Activated CD4-positive, alpha-beta T cell treated with anti-CD3 and anti-CD28 coated beads for 36 hours (primary cell): ENCODE measurements at regions of chr22 and their contacts with region 1.

Region 1: GRCh38 chr22:31290494-31291471 is 1.5 kb downstream of the PIK3IP1 start:
- DNase-seq: peak; percentile 97
- ATAC-seq: peak; percentile 78
- H3K4me3 Mint-ChIP-seq: peak overlapping the region; percentile 90
- H3K27ac Mint-ChIP-seq: peak overlapping the region; percentile 97
- H3K4me1 Mint-ChIP-seq: peaks cover 71% of the 10 kb centered on the region
- H3K27me3 Mint-ChIP-seq: no peaks in the 10 kb centered on the region

Region 2: DNA sequence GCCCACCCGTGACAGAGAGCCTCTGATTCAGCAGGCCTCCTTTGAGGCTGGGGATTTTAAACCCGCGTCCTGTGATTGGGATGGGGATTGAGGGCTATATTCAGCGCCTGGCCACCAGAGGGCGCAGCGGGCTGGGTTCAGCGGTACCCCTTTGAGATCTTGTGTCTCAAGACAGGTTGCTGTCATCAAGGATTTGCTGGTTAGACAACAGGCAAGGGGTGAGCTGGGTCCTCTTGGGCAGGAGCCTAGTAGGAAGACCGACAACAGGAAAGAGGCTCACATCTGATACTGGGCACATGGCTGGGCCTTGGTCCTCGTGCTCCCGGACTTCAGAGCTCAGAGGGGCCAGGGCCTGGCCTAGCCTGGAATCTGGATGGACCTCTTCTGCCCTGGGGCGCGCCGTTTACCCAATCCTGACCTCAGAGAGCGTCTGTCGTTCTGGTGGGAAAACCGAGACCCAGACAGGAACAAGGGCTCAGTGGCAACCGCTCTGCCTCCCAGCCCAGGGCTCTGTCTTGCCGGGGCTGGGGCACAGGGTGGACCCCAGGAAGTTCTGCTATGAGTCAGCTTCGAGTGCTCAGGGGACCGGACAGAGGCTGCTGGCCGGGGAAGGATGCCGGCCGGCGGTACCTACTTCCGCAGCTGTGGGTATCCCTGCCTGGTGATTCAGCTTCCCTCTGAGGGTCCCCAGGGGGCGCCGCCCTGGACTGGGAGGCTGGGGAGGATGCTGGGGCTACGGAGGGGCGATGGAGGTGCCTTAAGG is 656.1 kb before region 1 on chr22:
- CTCF ChIA-PET with region 1: no interaction called
- POLR2A ChIA-PET with region 1: no interaction called
- intact Hi-C with region 1: loop called in 1 of 2 experiments (anchors 5 kb)
- DNase-seq: peak; percentile 95
- ATAC-seq: peak; percentile 77
- H3K4me3 Mint-ChIP-seq: peak overlapping the region; percentile 75
- H3K27ac Mint-ChIP-seq: peak overlapping the region; percentile 84
- H3K4me1 Mint-ChIP-seq: peaks cover 22% of the 10 kb centered on the region
- H3K27me3 Mint-ChIP-seq: no peaks in the 10 kb centered on the region

Region 3: DNA sequence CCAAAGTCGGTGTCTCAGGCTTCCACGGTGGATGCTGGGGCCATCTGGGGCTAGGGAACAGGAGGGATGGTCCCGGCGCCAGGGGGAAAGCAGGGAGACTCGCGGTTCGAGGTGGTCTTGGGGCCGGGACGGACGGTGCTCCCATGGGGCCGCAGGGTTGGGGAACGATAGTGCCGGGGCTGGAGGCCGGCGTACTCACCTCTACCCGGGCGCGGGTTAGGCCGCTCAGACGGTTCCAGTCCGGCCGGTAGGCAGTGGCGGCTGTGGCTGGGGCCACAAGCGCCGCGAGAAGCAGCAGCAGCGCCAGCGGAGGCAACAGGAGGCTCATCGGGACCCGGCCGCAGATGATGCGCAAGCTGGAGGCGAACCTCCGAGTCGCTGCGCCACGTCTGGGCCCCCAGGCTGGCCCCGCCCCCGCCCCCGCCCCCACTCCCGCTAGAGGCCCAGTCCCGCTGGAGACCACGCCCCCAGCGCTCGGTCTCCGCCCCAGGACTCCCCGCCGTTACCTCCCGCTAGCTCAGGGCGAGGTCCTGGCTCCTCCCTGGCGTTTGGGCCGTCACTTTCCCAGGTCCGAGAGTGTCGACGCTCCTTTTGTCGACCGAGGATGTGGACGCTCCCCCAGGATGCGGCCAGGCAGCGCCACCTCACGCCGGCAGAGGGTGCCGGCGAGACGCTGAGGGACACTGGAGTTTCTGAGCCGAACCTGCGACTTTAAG is 183.4 kb before region 1 on chr22 and contains the start of gene SELENOM:
- CTCF ChIA-PET with region 1: interaction called, 6 read pairs
- POLR2A ChIA-PET with region 1: interaction called, 4 read pairs
- intact Hi-C with region 1: loop called in 1 of 2 experiments (anchors 1 kb)
- DNase-seq: peak; percentile 94
- ATAC-seq: peak; percentile 96
- H3K4me3 Mint-ChIP-seq: peak within 1 kb of the TSS; percentile 74
- H3K27ac Mint-ChIP-seq: peak within 1 kb of the TSS; percentile 60
- H3K4me1 Mint-ChIP-seq: peaks cover 19% of the 10 kb centered on the region
- H3K27me3 Mint-ChIP-seq: no peaks in the 10 kb centered on the region
- total RNA-seq, gene SELENOM: 8.8 to 12.2 TPM

Region 4: GRCh38 chr22:31272522-31273446 is 18.0 kb before region 1 on chr22:
- CTCF ChIA-PET with region 1: interaction called, 24 read pairs
- POLR2A ChIA-PET with region 1: interaction called, 38 read pairs
- intact Hi-C with region 1: no loop called
- DNase-seq: peak; percentile 70
- ATAC-seq: peak; percentile 84
- H3K4me3 Mint-ChIP-seq: no peak overlapping the region
- H3K27ac Mint-ChIP-seq: no peak overlapping the region
- H3K4me1 Mint-ChIP-seq: peaks cover 51% of the 10 kb centered on the region
- H3K27me3 Mint-ChIP-seq: no peaks in the 10 kb centered on the region

Region 5: GRCh38 chr22:31345331-31346254 is 54.8 kb after region 1 on chr22:
- CTCF ChIA-PET with region 1: interaction called, 6 read pairs
- POLR2A ChIA-PET with region 1: interaction called, 8 read pairs
- intact Hi-C with region 1: loop called (anchors 1 to 5 kb)
- DNase-seq: peak; percentile 93
- ATAC-seq: peak; percentile 59
- H3K4me3 Mint-ChIP-seq: peak overlapping the region; percentile 90
- H3K27ac Mint-ChIP-seq: peak overlapping the region; percentile 92
- H3K4me1 Mint-ChIP-seq: peaks cover 44% of the 10 kb centered on the region
- H3K27me3 Mint-ChIP-seq: no peaks in the 10 kb centered on the region

Region 6: GRCh38 chr22:31749636-31750364 is 459.0 kb after region 1 on chr22 and contains the start of gene PRR14L:
- CTCF ChIA-PET with region 1: no interaction called
- POLR2A ChIA-PET with region 1: interaction called, 5 read pairs
- intact Hi-C with region 1: loop called (anchors 1 to 5 kb)
- DNase-seq: peak; percentile 100
- ATAC-seq: peak; percentile 71
- H3K4me3 Mint-ChIP-seq: peak within 1 kb of the TSS; percentile 89
- H3K27ac Mint-ChIP-seq: peak within 1 kb of the TSS; percentile 93
- H3K4me1 Mint-ChIP-seq: peaks cover 43% of the 10 kb centered on the region
- H3K27me3 Mint-ChIP-seq: no peaks in the 10 kb centered on the region
- total RNA-seq, gene PRR14L: 48.2 to 52.2 TPM

Region 7: GRCh38 chr22:31776231-31776630 is 485.4 kb after region 1 on chr22:
- CTCF ChIA-PET with region 1: no interaction called
- POLR2A ChIA-PET with region 1: no interaction called
- intact Hi-C with region 1: no loop called
- DNase-seq: no peak
- ATAC-seq: no peak
- H3K4me3 Mint-ChIP-seq: no peak overlapping the region
- H3K27ac Mint-ChIP-seq: no peak overlapping the region
- H3K4me1 Mint-ChIP-seq: no peaks in the 10 kb centered on the region
- H3K27me3 Mint-ChIP-seq: no peaks in the 10 kb centered on the region